HEK293 (cell line): ENCODE measurements at regions of chr12 and their contacts with region 1.

Region 1: GRCh38 chr12:24991209-24992049 is 42.5 kb upstream of the BCAT1 start:
- H3K4me3 ChIP-seq: no peak overlapping the region
- H3K27ac ChIP-seq: no peak overlapping the region
- H3K4me1 ChIP-seq: no peaks in the 10 kb centered on the region
- CTCF ChIP-seq: peak; percentile 59; the same call in 1 of the 2 replicates

Region 2: GRCh38 chr12:24909667-24910066 is 81.8 kb before region 1 on chr12:
- CTCF ChIA-PET with region 1: no interaction called
- POLR2A ChIA-PET with region 1: no interaction called
- H3K4me3 ChIP-seq: no peak overlapping the region
- H3K27ac ChIP-seq: no peak overlapping the region
- H3K4me1 ChIP-seq: 0 out of 2 replicates have a peak, but pooled peaks cover 2% of the 10 kb centered on the region
- CTCF ChIP-seq: no peak

Region 3: DNA sequence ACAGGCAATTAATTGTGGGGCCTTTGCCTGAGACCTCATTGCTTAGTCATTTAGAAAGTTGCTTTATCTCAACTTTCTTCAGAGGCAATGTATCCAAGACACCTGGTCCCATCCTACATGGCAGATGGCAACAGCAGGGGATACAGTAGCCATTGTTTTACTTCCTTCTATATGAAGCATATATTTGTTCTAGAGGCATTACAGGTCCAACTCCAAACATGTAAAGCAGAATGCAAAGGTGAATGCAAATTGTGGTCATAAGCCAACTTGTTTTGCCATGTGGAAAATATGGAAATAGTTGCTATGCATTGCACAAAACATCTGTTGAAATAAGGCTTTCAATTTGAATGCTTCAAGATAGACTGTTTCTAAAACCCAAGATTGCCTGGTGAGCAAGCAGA is 67.2 kb after region 1 on chr12:
- CTCF ChIA-PET with region 1: no interaction called
- POLR2A ChIA-PET with region 1: no interaction called
- H3K4me3 ChIP-seq: no peak overlapping the region
- H3K27ac ChIP-seq: no peak overlapping the region
- H3K4me1 ChIP-seq: no peaks in the 10 kb centered on the region
- CTCF ChIP-seq: no peak

Region 4: GRCh38 chr12:25130741-25131188 is 139.3 kb after region 1 on chr12:
- CTCF ChIA-PET with region 1: interaction called, 60 read pairs
- POLR2A ChIA-PET with region 1: no interaction called
- H3K4me3 ChIP-seq: no peak overlapping the region
- H3K27ac ChIP-seq: no peak overlapping the region
- H3K4me1 ChIP-seq: no peaks in the 10 kb centered on the region
- CTCF ChIP-seq: no peak

Region 5: GRCh38 chr12:25151476-25151875 is 160.0 kb after region 1 on chr12:
- CTCF ChIA-PET with region 1: interaction called, 28 read pairs
- POLR2A ChIA-PET with region 1: no interaction called
- H3K4me3 ChIP-seq: no peak overlapping the region
- H3K27ac ChIP-seq: no peak overlapping the region
- H3K4me1 ChIP-seq: no peaks in the 10 kb centered on the region
- CTCF ChIP-seq: no peak